ENCODE measurements at regions of chr2 and their contacts with region 1.

Region 1: DNA sequence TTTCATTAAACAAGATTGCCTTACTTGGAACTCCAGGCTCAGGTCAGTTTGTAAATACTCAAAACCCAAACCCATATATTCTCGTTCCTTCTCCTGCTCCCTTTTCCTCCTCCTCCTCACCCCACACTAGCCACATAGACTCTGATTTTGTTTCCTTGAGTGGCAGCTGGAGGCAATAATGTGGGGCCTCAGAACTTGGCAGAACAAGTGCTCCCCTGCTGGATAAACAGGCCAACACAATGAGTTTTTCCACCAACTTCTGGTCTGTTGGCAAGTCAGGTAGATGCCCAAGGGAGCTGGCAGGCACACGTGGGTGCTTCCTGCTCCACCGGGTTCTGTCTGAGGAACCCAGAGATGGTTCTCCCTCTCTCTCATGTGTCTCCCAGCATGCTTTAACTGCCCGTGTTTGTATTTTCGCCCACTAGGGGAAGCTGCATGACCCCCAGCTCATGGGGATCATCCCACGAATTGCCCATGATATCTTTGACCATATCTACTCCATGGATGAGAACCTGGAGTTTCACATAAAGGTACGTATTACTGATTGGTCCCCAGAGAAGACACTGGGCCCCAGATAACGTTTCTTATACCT is 61.9 kb downstream of the KIF5C start:
- DNase-seq: no peak
- H3K4me3 ChIP-seq: no peak overlapping the region
- H3K27me3 ChIP-seq: no peaks in the 10 kb centered on the region; the same call in 1 of the 2 replicates
- CTCF ChIP-seq: no peak

Region 2: DNA sequence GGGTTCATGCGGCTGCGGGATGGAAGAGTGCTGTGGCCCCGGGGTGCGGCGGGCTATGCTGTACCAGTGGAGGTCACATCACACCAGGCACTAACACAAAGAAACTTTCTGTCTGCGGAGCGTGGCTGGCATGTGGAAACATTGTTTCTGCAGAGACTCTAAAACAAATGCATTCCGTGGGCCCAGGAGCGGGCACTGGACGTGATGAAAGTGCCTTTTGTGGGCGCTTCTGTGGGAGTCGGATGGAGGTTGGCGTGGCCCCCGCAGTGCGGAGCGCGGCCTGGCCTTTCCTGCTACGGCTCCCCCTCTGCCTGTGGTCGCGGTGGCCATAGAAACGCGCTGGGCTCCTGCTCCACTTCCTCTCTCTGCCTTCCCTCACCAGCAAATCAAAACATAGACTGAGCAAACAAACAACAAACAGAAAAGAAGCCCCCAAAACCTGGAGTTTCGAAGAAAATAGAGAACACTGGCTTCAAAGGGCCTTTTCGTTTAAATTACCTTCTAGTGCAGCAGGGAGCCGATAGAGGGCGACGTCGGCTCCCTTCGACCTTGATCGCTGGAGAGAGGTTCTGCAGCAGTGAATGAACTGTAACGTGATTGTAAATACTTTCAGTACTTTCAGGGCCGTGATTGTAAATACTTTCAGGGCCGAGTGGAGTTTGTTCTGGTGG is 10.5 kb before region 1 on chr2:
- CTCF ChIA-PET with region 1: interaction called, 13 read pairs
- POLR2A ChIA-PET with region 1: no interaction called
- DNase-seq: no peak
- H3K4me3 ChIP-seq: no peak overlapping the region
- H3K27me3 ChIP-seq: peaks cover 1% of the 10 kb centered on the region
- CTCF ChIP-seq: peak; percentile 81

Region 3: DNA sequence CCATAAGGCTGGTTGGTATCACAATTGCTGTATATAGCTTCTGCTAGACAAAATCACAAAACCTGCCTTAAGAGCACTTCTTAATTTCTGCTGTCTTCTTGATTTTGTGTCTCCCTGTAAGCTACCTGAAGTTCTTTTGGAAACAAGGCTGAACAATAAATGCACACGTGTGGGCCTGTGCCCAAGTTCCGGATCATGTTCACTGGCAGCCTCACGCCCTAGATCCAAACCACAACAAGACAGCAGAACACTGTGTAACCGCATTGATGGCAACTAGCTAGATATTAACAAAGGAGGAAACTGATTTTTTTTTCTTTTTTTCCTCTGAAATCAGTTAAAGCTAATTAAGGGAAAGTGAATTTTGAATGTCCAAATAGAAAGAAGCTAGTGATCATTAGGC is 20.1 kb after region 1 on chr2:
- CTCF ChIA-PET with region 1: no interaction called
- POLR2A ChIA-PET with region 1: no interaction called
- DNase-seq: no peak
- H3K4me3 ChIP-seq: no peak overlapping the region
- H3K27me3 ChIP-seq: no peaks in the 10 kb centered on the region
- CTCF ChIP-seq: no peak